Right ventricle myocardium superior (tissue), 1 donor: ENCODE measurements at regions of chr17 and their contacts with region 1.

Region 1: GRCh38 chr17:30600049-30600829 is 123.0 kb downstream of the GOSR1 start:
- DNase-seq: peak; percentile 91
- ATAC-seq: peak; percentile 99

Region 2: DNA sequence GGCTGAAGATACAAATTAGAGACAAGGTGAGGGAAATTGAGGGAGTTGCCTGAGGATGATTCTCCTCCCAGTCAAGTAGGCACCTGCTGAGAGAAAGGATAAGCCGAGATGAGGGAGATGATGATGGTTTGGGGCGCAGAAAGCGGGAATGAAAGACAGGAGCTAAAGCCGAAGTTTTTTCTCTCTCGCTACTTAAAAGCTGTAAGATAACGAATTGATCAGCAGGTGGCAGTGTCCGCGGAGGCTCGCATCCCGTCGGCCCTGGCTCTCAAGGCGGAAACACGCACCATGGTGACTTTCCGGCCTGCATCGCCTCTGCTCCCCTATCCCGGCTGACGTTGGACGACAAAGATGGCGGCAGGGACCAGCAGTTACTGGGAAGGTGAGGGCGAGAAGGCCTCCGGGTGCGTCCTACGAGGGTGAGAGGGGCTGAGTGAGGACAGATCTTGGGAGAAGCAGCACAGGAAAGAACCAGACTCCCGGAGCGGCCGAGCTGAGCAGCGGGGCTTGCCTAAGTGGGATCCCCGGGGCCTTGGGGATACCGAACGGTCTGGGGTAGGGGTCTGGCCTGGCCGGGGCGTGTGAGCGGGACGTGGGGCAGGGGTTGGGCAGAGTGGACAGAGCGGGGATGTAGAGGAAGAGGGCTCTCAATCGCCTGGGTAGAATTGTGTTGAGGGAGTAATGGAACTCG is 123.0 kb before region 1 on chr17 and contains the start of gene GOSR1:
- intact Hi-C with region 1: loop called (anchors 5 kb)
- DNase-seq: peak; percentile 95
- ATAC-seq: peak; percentile 100
- total RNA-seq, gene GOSR1: 29.7 TPM